ENCODE measurements at regions of chr13 and their contacts with region 1.

Region 1: GRCh38 chr13:110392510-110393240 is 85.6 kb downstream of the COL4A2 start:
- DNase-seq: no peak
- ATAC-seq: no peak
- H3K4me3 ChIP-seq: no peak overlapping the region
- H3K27ac ChIP-seq: peak overlapping the region; percentile 8 to 77
- H3K4me1 ChIP-seq: peaks cover 14 to 15% of the 10 kb centered on the region in 2 donors
- H3K27me3 ChIP-seq: no peaks in the 10 kb centered on the region

Region 2: GRCh38 chr13:110340812-110341444 is 51.7 kb before region 1 on chr13:
- intact Hi-C with region 1: loop called in 1 of 2 experiments (anchors 2 kb)
- DNase-seq: peak; percentile 94 to 97
- ATAC-seq: peak; percentile 80
- H3K4me3 ChIP-seq: no peak overlapping the region
- H3K27ac ChIP-seq: peak overlapping the region; percentile 96 to 99
- H3K4me1 ChIP-seq: peaks cover 10 to 13% of the 10 kb centered on the region in 2 donors
- H3K27me3 ChIP-seq: no peaks in the 10 kb centered on the region

Region 3: DNA sequence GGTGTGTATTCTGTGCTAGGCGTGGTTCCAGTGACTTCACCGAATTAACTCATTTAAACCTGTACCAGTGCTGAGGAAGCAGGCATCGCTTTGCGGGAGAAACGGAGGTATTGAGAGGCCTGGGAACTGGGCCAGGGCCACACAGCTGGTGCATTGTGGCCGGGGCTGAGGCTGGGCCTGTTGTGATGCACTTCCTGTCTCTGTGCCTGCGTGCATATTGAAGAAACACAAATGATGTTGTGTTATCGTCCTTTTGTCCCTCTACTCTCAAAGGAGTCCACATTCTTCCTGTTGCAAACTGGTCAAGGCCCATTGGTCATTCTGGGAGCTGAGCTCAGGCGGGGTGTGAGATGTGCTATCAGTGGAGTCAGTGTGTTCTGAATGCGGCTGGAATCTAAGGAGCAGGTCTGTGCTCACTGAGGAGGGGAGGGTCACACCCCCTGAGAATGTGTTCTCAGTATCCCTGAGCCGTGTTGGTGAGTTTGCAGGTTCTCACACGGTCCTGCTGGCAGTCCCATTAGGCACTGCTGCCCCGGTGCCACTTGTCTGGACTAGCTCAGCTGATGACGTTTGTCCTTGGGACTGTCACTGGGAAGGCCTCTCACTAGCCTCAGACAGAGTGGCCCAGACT is 784.5 kb after region 1 on chr13:
- intact Hi-C with region 1: no loop called
- DNase-seq: peak in 1 of 2 donors; percentile 75
- ATAC-seq: peak; percentile 65
- H3K4me3 ChIP-seq: no peak overlapping the region
- H3K27ac ChIP-seq: peak overlapping the region; percentile 99 to 100
- H3K4me1 ChIP-seq: peaks cover 9 to 13% of the 10 kb centered on the region in 2 donors
- H3K27me3 ChIP-seq: no peaks in the 10 kb centered on the region